Breast epithelium (tissue), 4 donors: ENCODE measurements at regions of chr20 and their contacts with region 1.

Region 1: GRCh38 chr20:48112845-48113560 is 327.7 kb upstream of the SULF2 start:
- DNase-seq: no peak
- H3K4me3 ChIP-seq: no peak overlapping the region
- H3K27ac ChIP-seq: no peak overlapping the region
- H3K4me1 ChIP-seq: no peaks in the 10 kb centered on the region
- H3K27me3 ChIP-seq: no peaks in the 10 kb centered on the region
- CTCF ChIP-seq: no peak
- POLR2A ChIP-seq: no peak

Region 2: DNA sequence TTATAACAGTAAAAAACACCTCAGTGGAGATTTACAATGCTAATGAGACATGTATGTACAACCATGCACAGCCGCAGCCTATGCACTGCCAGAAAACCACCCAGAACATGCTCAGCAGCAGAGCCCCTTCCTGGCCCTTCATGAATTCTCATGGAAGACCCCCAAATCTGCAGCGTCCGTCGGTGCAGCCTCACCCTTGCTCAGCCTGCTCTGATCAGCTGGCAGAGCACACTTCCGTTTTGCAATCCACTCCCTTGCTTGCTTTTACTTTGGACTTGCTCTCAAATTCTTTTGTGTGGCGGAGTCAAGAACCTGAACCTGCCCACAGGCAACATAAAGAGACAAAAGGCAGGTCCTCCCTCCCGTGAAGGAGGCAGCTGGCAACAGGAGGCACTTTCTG is 50.5 kb after region 1 on chr20:
- intact Hi-C with region 1: loop called (anchors 2 kb)
- DNase-seq: no peak
- H3K4me3 ChIP-seq: no peak overlapping the region
- H3K27ac ChIP-seq: no peak overlapping the region
- H3K4me1 ChIP-seq: no peaks in the 10 kb centered on the region
- H3K27me3 ChIP-seq: peaks cover 0 to 9% of the 10 kb centered on the region in 2 donors
- CTCF ChIP-seq: no peak
- POLR2A ChIP-seq: no peak

Region 3: GRCh38 chr20:48364688-48365421 is 251.9 kb after region 1 on chr20:
- intact Hi-C with region 1: no loop called
- DNase-seq: no peak
- H3K4me3 ChIP-seq: no peak overlapping the region
- H3K27ac ChIP-seq: no peak overlapping the region
- H3K4me1 ChIP-seq: no peaks in the 10 kb centered on the region
- H3K27me3 ChIP-seq: peaks cover 0 to 11% of the 10 kb centered on the region in 2 donors
- CTCF ChIP-seq: no peak
- POLR2A ChIP-seq: no peak

Region 4: GRCh38 chr20:48769069-48769879 is 656.3 kb after region 1 on chr20:
- intact Hi-C with region 1: no loop called
- DNase-seq: no peak
- H3K4me3 ChIP-seq: no peak overlapping the region
- H3K27ac ChIP-seq: no peak overlapping the region
- H3K4me1 ChIP-seq: no peaks in the 10 kb centered on the region
- H3K27me3 ChIP-seq: no peaks in the 10 kb centered on the region
- CTCF ChIP-seq: no peak
- POLR2A ChIP-seq: no peak